ENCODE measurements at regions of chr1 and their contacts with region 1.

Region 1: GRCh38 chr1:101309334-101310311 is 72.8 kb downstream of the S1PR1 start:
- DNase-seq: peak; percentile 49
- CTCF ChIP-seq: peak; percentile 84

Region 2: GRCh38 chr1:101364370-101365120 is 54.9 kb after region 1 on chr1:
- in situ Hi-C with region 1: loop called (anchors 5 kb)
- DNase-seq: no peak
- CTCF ChIP-seq: no peak

Region 3: DNA sequence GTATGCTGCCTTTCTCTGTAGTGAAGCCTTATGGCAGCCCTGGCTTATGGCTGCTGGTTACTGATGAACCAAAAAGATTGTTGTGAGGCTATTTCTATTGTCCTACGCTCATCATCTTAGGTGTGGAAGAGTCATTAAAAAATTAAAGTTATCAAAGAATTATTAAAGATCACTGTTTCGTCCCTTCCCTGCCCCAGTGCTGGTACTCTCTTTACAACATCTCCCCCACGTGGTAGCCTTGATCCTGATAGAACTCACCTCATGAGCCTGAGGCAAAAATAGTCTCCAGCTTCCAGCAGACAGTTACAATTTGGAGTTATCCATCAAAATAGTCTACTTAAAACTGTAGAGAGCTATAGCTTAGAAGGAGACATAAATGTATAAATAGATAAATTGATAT is 128.7 kb after region 1 on chr1:
- in situ Hi-C with region 1: loop called (anchors 5 kb)
- DNase-seq: peak; percentile 21
- CTCF ChIP-seq: peak; percentile 48

Region 4: GRCh38 chr1:101484689-101485338 is 175.2 kb after region 1 on chr1:
- in situ Hi-C with region 1: no loop called
- DNase-seq: no peak
- CTCF ChIP-seq: no peak

Measured in GM13976 (cell line).